Psoas muscle (tissue), 8 donors: ENCODE measurements at regions of chr22 and their contacts with region 1.

Region 1: DNA sequence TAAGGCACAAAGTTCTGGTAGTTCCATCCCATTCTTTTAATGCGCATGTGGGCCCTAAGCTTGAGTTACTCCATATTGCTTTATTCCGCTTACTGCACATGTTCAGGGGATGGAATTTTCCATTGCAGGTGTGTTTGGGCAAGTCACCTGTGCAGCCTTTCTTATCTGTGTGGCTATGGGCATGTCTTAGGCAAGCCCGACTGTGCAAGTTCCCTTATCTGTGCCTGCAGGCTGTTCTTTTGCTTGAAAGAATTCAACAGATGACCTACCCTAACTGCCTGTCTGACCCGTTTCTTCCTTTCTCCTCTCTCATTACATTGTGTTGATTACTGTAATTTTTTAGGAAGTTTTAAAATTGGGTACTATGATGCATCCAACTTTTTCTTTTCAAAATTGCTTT is 363.6 kb downstream of the TTC28 start:
- DNase-seq: no peak
- ATAC-seq: no peak
- H3K4me3 ChIP-seq: no peak overlapping the region
- H3K27ac ChIP-seq: no peak overlapping the region
- H3K4me1 ChIP-seq: no peaks in the 10 kb centered on the region
- H3K27me3 ChIP-seq: no peaks in the 10 kb centered on the region
- CTCF ChIP-seq: no peak

Region 2: GRCh38 chr22:27885977-27886842 is 429.8 kb before region 1 on chr22:
- intact Hi-C with region 1: no loop called
- DNase-seq: no peak
- ATAC-seq: peak in 3 of 4 donors; percentile 42 to 75 (median 57)
- H3K4me3 ChIP-seq: no peak overlapping the region
- H3K27ac ChIP-seq: no peak overlapping the region
- H3K4me1 ChIP-seq: peaks cover 22% of the 10 kb centered on the region
- H3K27me3 ChIP-seq: no peaks in the 10 kb centered on the region
- CTCF ChIP-seq: peak; percentile 87

Region 3: GRCh38 chr22:28094771-28095170 is 221.2 kb before region 1 on chr22:
- intact Hi-C with region 1: no loop called
- DNase-seq: no peak
- ATAC-seq: no peak
- H3K4me3 ChIP-seq: no peak overlapping the region
- H3K27ac ChIP-seq: no peak overlapping the region
- H3K4me1 ChIP-seq: no peaks in the 10 kb centered on the region
- H3K27me3 ChIP-seq: no peaks in the 10 kb centered on the region
- CTCF ChIP-seq: no peak

Region 4: GRCh38 chr22:28329186-28330073 is 13.4 kb after region 1 on chr22:
- intact Hi-C with region 1: loop called in 1 of 2 experiments (anchors 1 kb)
- DNase-seq: no peak
- ATAC-seq: peak in 2 of 4 donors; percentile 35 to 36
- H3K4me3 ChIP-seq: no peak overlapping the region
- H3K27ac ChIP-seq: no peak overlapping the region
- H3K4me1 ChIP-seq: peaks cover 24% of the 10 kb centered on the region
- H3K27me3 ChIP-seq: no peaks in the 10 kb centered on the region
- CTCF ChIP-seq: no peak